Left cardiac atrium (tissue), 4 donors: ENCODE measurements at regions of chr2 and their contacts with region 1.

Region 1: GRCh38 chr2:197804049-197804757 is at the start of gene PLCL1:
- DNase-seq: peak; percentile 94
- ATAC-seq: peak; percentile 96 to 98
- total RNA-seq, gene PLCL1: 17.7 to 19.1 TPM

Region 2: GRCh38 chr2:197268786-197269584 is 535.2 kb before region 1 on chr2:
- intact Hi-C with region 1: no loop called
- DNase-seq: no peak
- ATAC-seq: peak in 1 of 2 donors; percentile 77

Region 3: GRCh38 chr2:197641666-197642065 is 162.5 kb before region 1 on chr2:
- intact Hi-C with region 1: no loop called
- DNase-seq: no peak
- ATAC-seq: no peak

Region 4: GRCh38 chr2:197889041-197889440 is 84.8 kb after region 1 on chr2:
- intact Hi-C with region 1: loop called in 1 of 2 experiments (anchors 10 kb)
- DNase-seq: no peak
- ATAC-seq: peak in 1 of 2 donors; percentile 59

Region 5: GRCh38 chr2:197969391-197969893 is 165.2 kb after region 1 on chr2:
- intact Hi-C with region 1: loop called in 1 of 2 experiments (anchors 5 kb)
- DNase-seq: no peak
- ATAC-seq: peak; percentile 91 to 98

Region 6: DNA sequence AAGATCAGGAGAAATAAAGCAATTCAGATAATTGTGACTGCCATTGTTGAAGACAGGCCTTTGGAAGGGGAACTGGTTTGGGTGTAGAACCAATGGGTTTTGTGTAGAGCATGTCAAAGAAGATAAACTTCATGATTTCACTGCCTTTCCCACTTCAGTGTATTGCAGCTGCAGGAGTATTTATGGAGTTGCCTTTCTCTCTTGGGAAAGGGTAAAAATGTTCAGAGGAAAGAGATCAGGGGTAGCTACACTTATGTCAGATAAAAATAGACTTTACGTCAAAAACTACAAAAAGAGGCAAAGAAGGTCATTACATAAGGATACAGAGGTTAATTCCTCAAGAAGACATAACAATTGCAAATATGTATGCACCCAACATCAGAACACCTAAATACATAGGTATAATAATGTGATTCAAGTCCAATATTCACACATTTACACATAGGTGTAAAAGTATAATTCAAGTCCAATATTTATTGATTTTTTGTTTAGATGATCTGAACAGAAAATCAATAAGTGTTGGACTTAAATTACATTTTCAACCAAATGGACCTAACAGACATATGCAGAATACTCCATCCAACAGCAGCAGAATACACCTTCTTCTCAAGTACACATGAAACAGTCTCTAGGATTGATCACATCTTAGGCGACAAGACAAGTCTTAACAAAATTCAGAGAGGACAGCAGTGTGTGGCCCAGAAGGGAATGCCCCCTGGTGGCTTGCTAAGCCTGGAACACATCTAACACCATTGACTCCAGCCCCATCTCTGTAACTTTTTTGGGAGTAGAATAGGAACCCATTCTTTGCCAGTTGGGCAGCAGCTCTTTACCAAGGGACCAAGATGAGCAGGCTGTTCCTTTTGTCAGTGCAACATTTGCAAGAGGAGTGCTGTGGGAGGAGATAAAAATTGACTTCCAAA is 249.8 kb after region 1 on chr2:
- intact Hi-C with region 1: loop called in 1 of 2 experiments (anchors 1 kb)
- DNase-seq: peak; percentile 27
- ATAC-seq: peak; percentile 63 to 72

Region 7: GRCh38 chr2:198127627-198128026 is 323.4 kb after region 1 on chr2:
- intact Hi-C with region 1: loop called (anchors 1 to 5 kb)
- DNase-seq: peak; percentile 31
- ATAC-seq: peak; percentile 83 to 85

Region 8: GRCh38 chr2:198296665-198297308 is 492.6 kb after region 1 on chr2:
- intact Hi-C with region 1: loop called (anchors 2 to 5 kb)
- DNase-seq: peak; percentile 25
- ATAC-seq: peak; percentile 75 to 77